ENCODE measurements at regions of chr10 and their contacts with region 1.

Region 1: GRCh38 chr10:103244663-103245271 is 920 bp upstream of the RPEL1 start:
- DNase-seq: peak; percentile 72 to 74
- ATAC-seq: peak; percentile 81 to 89 (median 86)
- H3K4me3 ChIP-seq: no peak overlapping the region
- H3K27ac ChIP-seq: no peak overlapping the region
- H3K4me1 ChIP-seq: peaks cover 11% of the 10 kb centered on the region
- H3K27me3 ChIP-seq: no peaks in the 10 kb centered on the region
- CTCF ChIP-seq: peak; percentile 92

Region 2: GRCh38 chr10:102917962-102918816 is 326.6 kb before region 1 on chr10 and contains the start of gene CNNM2:
- intact Hi-C with region 1: loop called (anchors 2 kb)
- DNase-seq: peak; percentile 100
- ATAC-seq: peak; percentile 96 to 98 (median 98)
- H3K4me3 ChIP-seq: peak within 1 kb of the TSS; percentile 98
- H3K27ac ChIP-seq: peak within 1 kb of the TSS; percentile 92
- H3K4me1 ChIP-seq: peaks cover 34% of the 10 kb centered on the region
- H3K27me3 ChIP-seq: no peaks in the 10 kb centered on the region
- CTCF ChIP-seq: no peak
- total RNA-seq, gene CNNM2: 0.49 to 2.6 (median 1.6) TPM

Region 3: DNA sequence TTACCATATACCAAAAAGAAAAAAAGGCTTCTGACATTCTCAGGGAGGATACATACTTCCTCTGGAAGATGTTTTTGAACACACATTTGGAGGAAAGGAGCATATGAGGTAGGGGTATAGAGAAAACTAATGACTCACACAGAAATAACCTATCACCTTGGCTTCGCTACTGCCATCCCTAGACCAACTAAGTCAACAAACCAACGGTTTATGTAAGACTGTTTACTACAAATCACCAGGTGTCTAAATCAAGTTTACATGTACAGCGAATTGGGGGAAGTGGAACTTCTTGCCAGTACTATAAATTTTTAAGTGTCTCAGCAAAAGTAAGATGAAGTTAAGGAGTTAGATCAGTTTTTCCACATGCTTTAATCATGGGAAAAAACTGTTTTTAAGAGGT is 148.6 kb before region 1 on chr10:
- intact Hi-C with region 1: loop called in 1 of 2 experiments (anchors 5 kb)
- DNase-seq: no peak
- ATAC-seq: no peak
- H3K4me3 ChIP-seq: no peak overlapping the region
- H3K27ac ChIP-seq: no peak overlapping the region
- H3K4me1 ChIP-seq: no peaks in the 10 kb centered on the region
- H3K27me3 ChIP-seq: no peaks in the 10 kb centered on the region
- CTCF ChIP-seq: no peak

Region 4: GRCh38 chr10:103104721-103105120 is 140.0 kb before region 1 on chr10:
- intact Hi-C with region 1: loop called (anchors 5 kb)
- DNase-seq: no peak
- ATAC-seq: peak in 2 of 4 donors; percentile 57 to 69
- H3K4me3 ChIP-seq: no peak overlapping the region
- H3K27ac ChIP-seq: peak overlapping the region; percentile 55
- H3K4me1 ChIP-seq: peaks cover 57% of the 10 kb centered on the region
- H3K27me3 ChIP-seq: no peaks in the 10 kb centered on the region
- CTCF ChIP-seq: no peak

Region 5: GRCh38 chr10:103192451-103193106 is 52.2 kb before region 1 on chr10:
- intact Hi-C with region 1: loop called (anchors 5 kb)
- DNase-seq: peak; percentile 87 to 92
- ATAC-seq: peak; percentile 56 to 73 (median 69)
- H3K4me3 ChIP-seq: peak overlapping the region; percentile 89
- H3K27ac ChIP-seq: peak overlapping the region; percentile 99
- H3K4me1 ChIP-seq: peaks cover 39% of the 10 kb centered on the region
- H3K27me3 ChIP-seq: no peaks in the 10 kb centered on the region
- CTCF ChIP-seq: no peak